ENCODE measurements at regions of chr15 and their contacts with region 1.

Region 1: DNA sequence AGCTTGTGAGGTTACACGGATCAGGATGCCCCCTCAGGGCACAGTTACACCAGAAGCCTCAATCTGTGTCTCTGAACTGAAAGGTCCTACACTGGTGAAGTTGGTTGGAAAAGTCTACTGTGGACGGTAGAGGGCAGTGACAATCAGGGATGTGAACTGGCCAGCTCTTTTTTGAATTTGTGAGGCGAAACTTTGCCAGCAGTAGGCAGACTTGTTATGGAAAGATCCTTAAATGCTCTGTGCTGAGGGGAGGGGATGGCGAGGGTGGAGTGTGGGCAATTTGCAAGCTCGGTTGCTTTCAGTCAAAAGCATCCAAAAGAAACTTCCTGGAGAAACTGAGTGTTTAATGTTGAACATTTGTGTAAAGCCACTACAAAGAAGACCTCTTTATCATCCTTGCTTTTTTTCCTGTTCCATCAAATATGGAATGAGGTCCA is 127.4 kb upstream of the ABHD17C start:
- DNase-seq: peak in 1 of 2 experiments; percentile 59
- H3K4me3 ChIP-seq: no peak overlapping the region
- H3K27ac ChIP-seq: no peak overlapping the region
- H3K4me1 ChIP-seq: peaks cover 0 to 13% (median 3%) of the 10 kb centered on the region in 4 experiments; a peak in 4 of 7 replicates
- H3K27me3 ChIP-seq: no peaks in the 10 kb centered on the region
- CTCF ChIP-seq: peak; percentile 30 to 98 (median 91)
- EP300 ChIP-seq: no peak
- POLR2A ChIP-seq: no peak
- RAD21 ChIP-seq: peak; percentile 90 to 93

Region 2: GRCh38 chr15:80396094-80396493 is 171.6 kb before region 1 on chr15:
- CTCF ChIA-PET with region 1: no interaction called
- POLR2A ChIA-PET with region 1: no interaction called
- DNase-seq: no peak
- H3K4me3 ChIP-seq: no peak overlapping the region
- H3K27ac ChIP-seq: no peak overlapping the region
- H3K4me1 ChIP-seq: peaks cover 0 to 4% (median under 1%) of the 10 kb centered on the region in 4 experiments; a peak in 3 of 7 replicates
- H3K27me3 ChIP-seq: no peaks in the 10 kb centered on the region
- CTCF ChIP-seq: no peak
- EP300 ChIP-seq: no peak
- POLR2A ChIP-seq: no peak
- RAD21 ChIP-seq: no peak

Region 3: GRCh38 chr15:80475572-80475971 is 92.2 kb before region 1 on chr15:
- CTCF ChIA-PET with region 1: interaction called, 28 read pairs
- POLR2A ChIA-PET with region 1: no interaction called
- DNase-seq: no peak
- H3K4me3 ChIP-seq: no peak overlapping the region
- H3K27ac ChIP-seq: no peak overlapping the region
- H3K4me1 ChIP-seq: peaks cover 10 to 28% (median 16%) of the 10 kb centered on the region in 4 experiments
- H3K27me3 ChIP-seq: no peaks in the 10 kb centered on the region
- CTCF ChIP-seq: peak in 1 of 3 experiments; percentile 18; a peak in 2 of 4 replicates
- EP300 ChIP-seq: no peak
- POLR2A ChIP-seq: no peak
- RAD21 ChIP-seq: peak in 1 of 2 experiments; percentile 11; a peak in 1 of 4 replicates

Region 4: GRCh38 chr15:80480909-80481308 is 86.8 kb before region 1 on chr15:
- CTCF ChIA-PET with region 1: interaction called, 28 read pairs
- POLR2A ChIA-PET with region 1: no interaction called
- DNase-seq: no peak
- H3K4me3 ChIP-seq: no peak overlapping the region
- H3K27ac ChIP-seq: peak overlapping the region; percentile 17; the same call in 1 of the 2 replicates
- H3K4me1 ChIP-seq: peaks cover 0 to 12% (median 10%) of the 10 kb centered on the region in 4 experiments; a peak in 6 of 7 replicates
- H3K27me3 ChIP-seq: no peaks in the 10 kb centered on the region
- CTCF ChIP-seq: no peak
- EP300 ChIP-seq: no peak
- POLR2A ChIP-seq: no peak
- RAD21 ChIP-seq: no peak

Region 5: GRCh38 chr15:80580106-80580505 is 12.4 kb after region 1 on chr15:
- CTCF ChIA-PET with region 1: interaction called, 43 read pairs
- POLR2A ChIA-PET with region 1: interaction called, 5 read pairs
- DNase-seq: no peak
- H3K4me3 ChIP-seq: no peak overlapping the region
- H3K27ac ChIP-seq: no peak overlapping the region; the same call in 1 of the 2 replicates
- H3K4me1 ChIP-seq: no peaks in the 10 kb centered on the region; a peak in 1 of 7 replicates
- H3K27me3 ChIP-seq: no peaks in the 10 kb centered on the region
- CTCF ChIP-seq: no peak
- EP300 ChIP-seq: no peak
- POLR2A ChIP-seq: no peak
- RAD21 ChIP-seq: no peak

Region 6: DNA sequence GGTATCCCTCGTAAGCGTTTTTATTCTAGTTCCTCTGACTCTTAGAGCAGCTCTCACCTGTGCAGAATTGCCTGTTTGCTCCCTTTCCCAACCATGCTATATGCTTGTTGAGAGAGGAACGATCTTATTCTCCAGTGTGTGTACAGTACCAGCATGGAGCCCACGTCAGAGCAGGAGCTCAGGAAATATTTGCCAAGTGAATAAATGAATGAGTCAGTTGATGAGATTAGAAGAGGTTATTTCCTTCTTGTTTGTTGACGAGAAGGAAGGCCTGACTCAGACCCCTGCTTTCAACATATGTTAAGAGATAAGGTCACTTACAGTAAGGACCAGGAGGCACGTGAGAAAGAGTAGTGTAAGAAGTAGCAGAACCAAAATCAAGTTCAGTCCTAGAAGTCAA is 21.1 kb after region 1 on chr15:
- CTCF ChIA-PET with region 1: interaction called, 31 read pairs
- POLR2A ChIA-PET with region 1: interaction called, 3 read pairs
- DNase-seq: no peak
- H3K4me3 ChIP-seq: no peak overlapping the region
- H3K27ac ChIP-seq: no peak overlapping the region
- H3K4me1 ChIP-seq: peaks cover 0 to 6% (median 5%) of the 10 kb centered on the region in 4 experiments; a peak in 4 of 7 replicates
- H3K27me3 ChIP-seq: no peaks in the 10 kb centered on the region
- CTCF ChIP-seq: no peak
- EP300 ChIP-seq: no peak
- POLR2A ChIP-seq: no peak
- RAD21 ChIP-seq: no peak

Region 7: DNA sequence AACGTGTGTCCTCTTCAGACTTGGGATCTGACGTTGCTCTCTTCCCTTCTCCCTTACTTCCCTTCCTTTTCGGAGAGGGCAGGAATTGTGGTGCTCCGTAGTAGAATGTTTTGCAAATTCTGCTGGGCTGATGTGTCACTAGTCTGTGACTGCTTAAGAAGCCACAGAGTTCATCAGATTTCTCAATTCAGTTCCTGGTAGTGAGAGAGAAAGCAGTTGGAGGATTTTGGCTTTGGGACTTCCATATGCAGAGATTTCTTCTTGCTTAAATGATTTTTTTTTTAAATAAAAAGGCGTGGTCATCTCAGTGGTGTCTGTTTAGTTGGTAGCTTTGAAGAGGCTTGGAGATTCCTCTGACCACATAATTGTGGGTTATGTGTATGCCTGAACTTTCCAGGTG is 221.6 kb after region 1 on chr15:
- CTCF ChIA-PET with region 1: interaction called, 10 read pairs
- POLR2A ChIA-PET with region 1: no interaction called
- DNase-seq: no peak
- H3K4me3 ChIP-seq: no peak overlapping the region
- H3K27ac ChIP-seq: no peak overlapping the region
- H3K4me1 ChIP-seq: no peaks in the 10 kb centered on the region
- H3K27me3 ChIP-seq: no peaks in the 10 kb centered on the region; a peak in 1 of 7 replicates
- CTCF ChIP-seq: no peak
- EP300 ChIP-seq: no peak
- POLR2A ChIP-seq: no peak
- RAD21 ChIP-seq: no peak